Activated CD4-positive, alpha-beta T cell treated with anti-CD3 and anti-CD28 coated beads for 36 hours (primary cell): ENCODE measurements at regions of chr11 and their contacts with region 1.

Region 1: GRCh38 chr11:47538741-47539574 is 14.0 kb downstream of the CELF1 start:
- DNase-seq: no peak
- ATAC-seq: no peak
- H3K4me3 Mint-ChIP-seq: no peak overlapping the region
- H3K27ac Mint-ChIP-seq: peak overlapping the region; percentile 83
- H3K4me1 Mint-ChIP-seq: peaks cover 71% of the 10 kb centered on the region
- H3K27me3 Mint-ChIP-seq: no peaks in the 10 kb centered on the region

Region 2: GRCh38 chr11:47509077-47509536 is 29.9 kb before region 1 on chr11:
- CTCF ChIA-PET with region 1: interaction called, 20 read pairs
- POLR2A ChIA-PET with region 1: interaction called, 6 read pairs
- intact Hi-C with region 1: loop called in 1 of 2 experiments (anchors 2 kb)
- DNase-seq: peak; percentile 16
- ATAC-seq: peak; percentile 30
- H3K4me3 Mint-ChIP-seq: peak overlapping the region; percentile 48
- H3K27ac Mint-ChIP-seq: peak overlapping the region; percentile 90
- H3K4me1 Mint-ChIP-seq: peaks cover 91% of the 10 kb centered on the region
- H3K27me3 Mint-ChIP-seq: no peaks in the 10 kb centered on the region

Region 3: GRCh38 chr11:47514825-47515647 is 23.9 kb before region 1 on chr11:
- CTCF ChIA-PET with region 1: interaction called, 20 read pairs
- POLR2A ChIA-PET with region 1: interaction called, 10 read pairs
- intact Hi-C with region 1: loop called (anchors 1 to 2 kb)
- DNase-seq: peak; percentile 69
- ATAC-seq: peak; percentile 95
- H3K4me3 Mint-ChIP-seq: peak overlapping the region; percentile 0
- H3K27ac Mint-ChIP-seq: peak overlapping the region; percentile 84
- H3K4me1 Mint-ChIP-seq: peaks cover 89% of the 10 kb centered on the region
- H3K27me3 Mint-ChIP-seq: no peaks in the 10 kb centered on the region

Region 4: GRCh38 chr11:47523468-47524225 is 15.3 kb before region 1 on chr11:
- CTCF ChIA-PET with region 1: interaction called, 15 read pairs
- POLR2A ChIA-PET with region 1: interaction called, 3 read pairs
- intact Hi-C with region 1: loop called in 1 of 2 experiments (anchors 2 kb)
- DNase-seq: peak; percentile 67
- ATAC-seq: peak; percentile 77
- H3K4me3 Mint-ChIP-seq: peak overlapping the region; percentile 32
- H3K27ac Mint-ChIP-seq: peak overlapping the region; percentile 85
- H3K4me1 Mint-ChIP-seq: peaks cover 72% of the 10 kb centered on the region
- H3K27me3 Mint-ChIP-seq: no peaks in the 10 kb centered on the region

Region 5: GRCh38 chr11:47571895-47572294 is 32.9 kb after region 1 on chr11:
- CTCF ChIA-PET with region 1: no interaction called
- POLR2A ChIA-PET with region 1: no interaction called
- intact Hi-C with region 1: no loop called
- DNase-seq: no peak
- ATAC-seq: no peak
- H3K4me3 Mint-ChIP-seq: no peak overlapping the region
- H3K27ac Mint-ChIP-seq: no peak overlapping the region
- H3K4me1 Mint-ChIP-seq: peaks cover 15% of the 10 kb centered on the region
- H3K27me3 Mint-ChIP-seq: no peaks in the 10 kb centered on the region